Dendritic cell treated with granulocyte-macrophage colony-stimulating factor and Interleukin-4, amounts not matched to agents 40 ng/mL and 50 ng/mL, for 4 days (primary cell): ENCODE measurements at regions of chr9 and their contacts with region 1.

Region 1: DNA sequence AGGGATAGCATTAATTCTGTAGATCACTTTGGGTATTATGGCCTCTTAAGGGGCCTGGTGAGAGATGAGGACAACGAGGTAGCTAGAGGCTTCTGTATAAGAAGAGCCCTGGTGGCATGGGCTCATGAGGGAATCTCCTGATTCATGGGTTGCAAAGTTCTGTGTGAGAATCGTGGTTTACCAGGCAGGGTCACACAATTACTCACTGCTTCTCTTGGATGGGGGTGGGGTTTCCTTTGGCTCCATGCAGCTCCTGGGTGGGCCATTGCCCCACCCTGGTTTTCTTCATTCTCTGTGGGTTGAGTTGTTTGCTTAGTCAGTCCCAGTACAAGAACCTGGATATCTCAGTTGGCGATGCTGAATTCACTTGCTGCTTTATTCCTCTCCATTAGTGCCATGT is 30.9 kb upstream of the TNFSF15 start:
- H3K4me3 Mint-ChIP-seq: no peak overlapping the region
- H3K27ac Mint-ChIP-seq: no peak overlapping the region
- H3K4me1 Mint-ChIP-seq: peaks cover 25% of the 10 kb centered on the region
- H3K27me3 Mint-ChIP-seq: no peaks in the 10 kb centered on the region

Region 2: DNA sequence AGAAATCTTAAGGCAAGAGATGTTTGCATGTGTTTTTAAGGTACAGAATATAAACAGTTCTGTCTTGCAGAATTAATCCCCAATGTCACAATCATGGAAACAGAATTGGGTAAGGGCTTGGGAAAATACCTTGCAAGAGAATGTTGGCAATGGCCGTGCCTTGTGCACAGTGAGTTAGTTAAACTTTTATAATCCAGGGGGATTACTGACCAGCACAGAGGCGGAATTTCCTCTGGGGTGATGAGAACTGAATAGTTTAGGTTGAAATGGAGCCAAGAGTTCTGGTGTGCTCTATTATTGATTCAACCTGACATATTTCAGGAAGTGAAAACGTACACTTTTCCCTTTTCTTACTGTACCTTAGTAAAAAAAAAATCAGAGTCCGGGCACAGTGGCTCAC is 50.5 kb before region 1 on chr9:
- intact Hi-C with region 1: loop called (anchors 5 kb)
- H3K4me3 Mint-ChIP-seq: no peak overlapping the region
- H3K27ac Mint-ChIP-seq: no peak overlapping the region
- H3K4me1 Mint-ChIP-seq: no peaks in the 10 kb centered on the region
- H3K27me3 Mint-ChIP-seq: peaks cover 2% of the 10 kb centered on the region